Aorta (tissue), 5 donors: ENCODE measurements at regions of chr5 and their contacts with region 1.

Region 1: DNA sequence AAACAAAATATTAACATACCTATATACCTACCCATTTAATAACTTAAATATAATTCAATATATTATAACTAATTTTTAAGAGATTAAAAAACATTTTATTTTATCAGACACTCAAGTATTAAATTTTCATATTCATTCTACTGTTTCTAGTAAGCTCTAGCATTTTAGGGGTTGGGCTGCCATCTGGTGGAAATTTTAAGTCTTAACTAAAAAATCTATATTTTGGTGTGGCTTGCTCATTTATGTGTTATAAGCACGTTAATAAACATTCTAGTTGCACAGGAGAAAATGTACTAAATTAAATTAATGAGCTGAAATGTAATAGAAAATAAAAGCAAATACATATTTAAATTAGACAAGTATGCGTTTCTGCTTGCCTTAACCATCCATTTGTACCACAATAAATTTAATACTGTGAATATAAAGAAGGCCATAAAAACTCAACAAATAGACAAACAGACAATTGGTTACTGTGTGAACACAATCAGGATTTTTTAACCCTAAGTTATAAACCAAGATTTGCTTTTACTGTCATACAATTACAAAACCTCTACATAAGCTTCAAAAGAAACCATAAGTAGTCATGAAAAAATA is 1728.3 kb upstream of the CDH9 start:
- DNase-seq: no peak
- ATAC-seq: no peak
- H3K4me3 ChIP-seq: no peak overlapping the region
- H3K27ac ChIP-seq: no peak overlapping the region
- H3K4me1 ChIP-seq: no peaks in the 10 kb centered on the region
- H3K27me3 ChIP-seq: no peaks in the 10 kb centered on the region

Region 2: DNA sequence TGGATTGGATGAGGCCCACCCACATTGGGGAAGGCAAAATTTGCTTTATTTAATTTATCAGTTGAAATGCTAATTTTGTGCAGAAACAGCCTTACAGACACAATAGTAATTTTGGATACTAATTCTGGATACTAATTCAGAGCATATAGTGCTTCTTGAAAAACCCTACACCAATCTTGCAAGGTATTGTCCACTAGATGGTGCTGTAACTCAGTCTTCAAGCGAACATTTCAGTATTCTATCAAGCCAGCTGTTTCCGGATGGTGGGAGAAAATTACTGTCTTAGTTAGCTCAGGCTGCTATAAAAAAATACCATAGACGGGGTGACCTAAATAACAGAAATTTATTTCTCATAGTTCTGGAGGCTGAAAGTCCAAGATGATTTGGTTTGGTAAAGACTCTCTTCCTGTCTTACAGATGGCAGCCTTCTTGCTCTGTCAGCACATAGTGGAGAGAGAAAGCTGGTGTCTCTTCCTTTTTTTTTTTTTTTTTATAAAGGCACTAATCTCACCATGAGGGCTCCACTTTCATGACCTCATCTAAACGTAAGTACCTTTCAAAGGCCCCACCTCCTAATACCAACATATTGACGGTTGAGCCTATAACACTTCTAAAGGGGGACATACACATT is 421.7 kb before region 1 on chr5:
- intact Hi-C with region 1: loop called (anchors 5 to 10 kb)
- DNase-seq: no peak
- ATAC-seq: no peak
- H3K4me3 ChIP-seq: no peak overlapping the region
- H3K27ac ChIP-seq: no peak overlapping the region
- H3K4me1 ChIP-seq: no peaks in the 10 kb centered on the region
- H3K27me3 ChIP-seq: no peaks in the 10 kb centered on the region

Region 3: GRCh38 chr5:28408186-28408585 is 358.5 kb before region 1 on chr5:
- intact Hi-C with region 1: no loop called
- DNase-seq: no peak
- ATAC-seq: no peak
- H3K4me3 ChIP-seq: no peak overlapping the region
- H3K27ac ChIP-seq: no peak overlapping the region
- H3K4me1 ChIP-seq: no peaks in the 10 kb centered on the region
- H3K27me3 ChIP-seq: no peaks in the 10 kb centered on the region

Region 4: DNA sequence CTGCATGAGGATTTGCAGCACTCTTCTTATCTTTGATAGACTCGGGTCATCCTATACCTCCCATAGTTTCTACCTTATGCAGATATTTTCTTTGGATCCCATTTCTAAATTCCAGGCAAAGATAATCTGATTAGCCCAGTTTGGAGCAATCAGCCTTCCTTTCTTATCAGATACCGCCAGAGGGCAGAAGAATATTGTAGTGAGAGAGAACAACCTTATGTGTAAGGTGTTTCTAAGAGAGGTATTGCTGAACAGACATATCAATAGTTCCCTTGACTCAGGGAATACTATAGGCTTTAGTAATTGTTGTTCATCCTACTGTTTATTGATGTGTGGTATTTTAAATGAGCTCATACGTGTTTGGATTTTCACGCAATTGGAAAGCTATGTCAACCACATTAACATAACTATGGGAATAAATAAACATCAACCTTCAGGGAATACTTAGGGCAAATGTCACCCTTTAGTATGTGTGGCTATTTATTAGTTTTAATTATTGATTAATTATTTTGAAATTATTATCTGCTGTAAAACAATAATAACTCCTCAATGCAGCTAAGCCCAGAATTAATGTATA is 293.0 kb before region 1 on chr5:
- intact Hi-C with region 1: loop called (anchors 5 kb)
- DNase-seq: no peak
- ATAC-seq: no peak
- H3K4me3 ChIP-seq: no peak overlapping the region
- H3K27ac ChIP-seq: no peak overlapping the region
- H3K4me1 ChIP-seq: no peaks in the 10 kb centered on the region
- H3K27me3 ChIP-seq: no peaks in the 10 kb centered on the region